ENCODE measurements at regions of chr11 and their contacts with region 1.

Region 1: GRCh38 chr11:22169833-22170232 is 23.1 kb upstream of the ANO5 start:
- DNase-seq: peak in 1 of 2 experiments; percentile 47
- H3K4me3 ChIP-seq: no peak overlapping the region
- H3K4me1 ChIP-seq: no peaks in the 10 kb centered on the region
- H3K27me3 ChIP-seq: peaks cover 19% of the 10 kb centered on the region

Region 2: DNA sequence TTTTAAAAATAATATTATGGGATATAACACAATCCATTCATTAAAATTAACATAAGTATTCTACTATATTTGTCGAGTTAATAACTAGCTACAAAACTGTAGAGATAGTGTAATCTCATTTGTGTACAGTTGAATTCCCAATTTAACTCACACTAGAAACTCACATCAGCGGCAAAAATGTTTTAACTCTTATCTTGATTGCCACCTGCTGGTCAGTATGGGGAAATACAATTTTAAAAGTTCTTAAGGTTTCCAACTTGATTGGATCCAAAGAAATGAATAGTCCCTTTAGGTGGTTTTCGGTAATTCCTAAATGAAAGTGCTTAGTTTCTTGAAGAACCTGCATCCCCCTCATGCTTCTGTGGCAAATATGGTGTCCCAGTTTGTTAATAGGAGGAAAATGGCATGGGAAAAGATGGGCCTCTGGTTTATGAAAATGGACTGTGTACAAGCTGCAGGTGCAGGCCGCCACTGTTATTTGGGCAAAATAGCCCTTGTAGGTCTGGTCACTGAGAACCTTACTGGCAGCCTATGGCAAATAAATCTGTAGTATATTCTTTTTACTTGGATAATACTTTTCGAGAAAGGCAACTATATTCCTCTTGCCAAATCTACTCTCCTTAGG is 134.6 kb after region 1 on chr11:
- in situ Hi-C with region 1: loop called (anchors 25 kb)
- DNase-seq: peak in 1 of 2 experiments; percentile 57
- H3K4me3 ChIP-seq: no peak overlapping the region
- H3K4me1 ChIP-seq: no peaks in the 10 kb centered on the region
- H3K27me3 ChIP-seq: peaks cover 17% of the 10 kb centered on the region